Ovary (tissue), 10 donors: ENCODE measurements at regions of chr7 and their contacts with region 1.

Region 1: DNA sequence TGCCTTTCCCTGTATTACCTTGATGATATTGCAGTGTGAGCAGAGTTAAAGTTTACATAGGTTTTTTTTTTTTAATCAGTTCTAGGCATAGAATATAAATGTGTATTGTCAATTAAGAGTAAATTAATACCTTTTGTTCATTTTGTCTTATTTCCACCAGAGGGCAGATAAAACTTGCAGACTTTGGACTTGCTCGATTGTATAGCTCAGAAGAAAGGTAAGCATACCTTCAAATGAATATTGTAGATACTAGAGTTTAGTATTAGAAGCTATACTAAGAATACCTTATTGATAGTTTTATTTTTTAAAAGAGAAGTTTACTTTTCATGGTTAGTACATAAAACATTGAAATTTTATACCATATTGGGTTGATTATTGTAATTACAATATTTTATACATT is 86.8 kb downstream of the MPLKIP start:
- DNase-seq: no peak
- H3K4me3 ChIP-seq: no peak overlapping the region
- H3K27ac ChIP-seq: no peak overlapping the region
- H3K4me1 ChIP-seq: peaks cover 2% of the 10 kb centered on the region
- H3K27me3 ChIP-seq: no peaks in the 10 kb centered on the region
- CTCF ChIP-seq: no peak
- EP300 ChIP-seq: no peak
- POLR2A ChIP-seq: no peak

Region 2: DNA sequence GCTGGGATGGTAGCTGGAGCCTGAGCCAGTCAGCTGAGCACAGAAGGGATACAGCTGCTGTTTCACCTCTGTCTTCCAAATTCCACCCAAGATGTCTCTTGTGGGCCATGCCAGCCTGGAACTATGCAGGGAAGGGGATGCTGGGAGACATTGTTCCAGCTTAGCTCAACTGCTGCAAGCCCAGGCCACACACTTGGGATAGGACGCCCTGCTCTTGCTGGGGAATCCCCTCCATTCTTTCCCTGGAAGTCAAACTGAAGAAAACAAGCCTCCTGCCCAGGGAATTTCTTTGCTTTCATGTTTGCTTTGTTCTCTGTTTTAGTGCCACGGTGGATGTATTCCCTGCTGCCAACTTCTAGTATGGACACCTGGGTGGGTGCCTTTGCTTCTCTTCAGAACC is 152.8 kb before region 1 on chr7:
- intact Hi-C with region 1: loop called in 3 of 4 experiments (anchors 2 to 10 kb)
- DNase-seq: no peak
- H3K4me3 ChIP-seq: no peak overlapping the region
- H3K27ac ChIP-seq: no peak overlapping the region
- H3K4me1 ChIP-seq: no peaks in the 10 kb centered on the region
- H3K27me3 ChIP-seq: no peaks in the 10 kb centered on the region
- CTCF ChIP-seq: no peak
- EP300 ChIP-seq: no peak
- POLR2A ChIP-seq: no peak